Vagina (tissue), 2 donors: ENCODE measurements at regions of chr3 and their contacts with region 1.

Region 1: GRCh38 chr3:3101660-3102458 is 8.3 kb downstream of the IL5RA start:
- DNase-seq: no peak
- H3K4me3 ChIP-seq: no peak overlapping the region
- H3K27ac ChIP-seq: no peak overlapping the region
- H3K4me1 ChIP-seq: no peaks in the 10 kb centered on the region
- H3K27me3 ChIP-seq: no peaks in the 10 kb centered on the region
- CTCF ChIP-seq: no peak
- POLR2A ChIP-seq: no peak

Region 2: DNA sequence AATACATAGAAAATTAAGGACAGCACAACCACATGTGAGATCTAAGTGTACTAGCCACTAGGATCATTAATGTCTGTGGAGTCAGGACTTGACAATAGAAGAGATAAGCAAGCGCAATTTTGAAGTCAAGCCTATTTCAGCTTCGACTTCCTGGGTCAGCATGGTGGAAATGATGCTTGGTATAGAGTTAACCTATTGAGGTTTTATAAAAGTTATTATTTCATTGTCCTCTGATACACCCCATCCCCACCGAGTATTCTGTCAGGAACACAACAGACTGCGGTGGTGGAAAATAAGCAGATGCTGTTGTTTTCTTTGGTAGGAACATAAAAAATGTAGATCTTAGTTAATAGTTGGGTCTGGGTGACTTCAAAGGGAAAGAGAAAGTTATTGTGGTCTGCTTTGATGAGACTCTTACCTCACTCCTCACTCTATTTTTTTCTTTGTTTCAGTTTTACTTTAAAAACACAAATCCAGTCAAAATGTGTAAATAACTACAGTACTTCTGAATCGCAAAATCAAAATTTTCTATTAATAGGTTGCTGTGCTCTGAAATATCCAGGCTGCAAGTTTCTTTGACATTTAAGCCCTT is 73.8 kb before region 1 on chr3:
- intact Hi-C with region 1: loop called (anchors 2 kb)
- DNase-seq: no peak
- H3K4me3 ChIP-seq: no peak overlapping the region
- H3K27ac ChIP-seq: no peak overlapping the region
- H3K4me1 ChIP-seq: no peaks in the 10 kb centered on the region
- H3K27me3 ChIP-seq: no peaks in the 10 kb centered on the region
- CTCF ChIP-seq: no peak
- POLR2A ChIP-seq: no peak

Region 3: GRCh38 chr3:3334491-3334890 is 232.6 kb after region 1 on chr3:
- intact Hi-C with region 1: no loop called
- DNase-seq: no peak
- H3K4me3 ChIP-seq: no peak overlapping the region
- H3K27ac ChIP-seq: no peak overlapping the region
- H3K4me1 ChIP-seq: no peaks in the 10 kb centered on the region
- H3K27me3 ChIP-seq: no peaks in the 10 kb centered on the region
- CTCF ChIP-seq: no peak
- POLR2A ChIP-seq: no peak